Activated T-helper 1 cell treated with anti-CD3 and anti-CD28 coated beads, Interleukin-12 subunit alpha, Interleukin-12 subunit beta, Interleukin-2, Interleukin-4 antibody, amounts not matched to agents 30 ng/mL and 10 ng/mL and 1 ng/mL, durations not matched to agents 14 hours and 24 hours and 36 hours (primary cell): ENCODE measurements at regions of chr17 and their contacts with region 1.

Region 1: DNA sequence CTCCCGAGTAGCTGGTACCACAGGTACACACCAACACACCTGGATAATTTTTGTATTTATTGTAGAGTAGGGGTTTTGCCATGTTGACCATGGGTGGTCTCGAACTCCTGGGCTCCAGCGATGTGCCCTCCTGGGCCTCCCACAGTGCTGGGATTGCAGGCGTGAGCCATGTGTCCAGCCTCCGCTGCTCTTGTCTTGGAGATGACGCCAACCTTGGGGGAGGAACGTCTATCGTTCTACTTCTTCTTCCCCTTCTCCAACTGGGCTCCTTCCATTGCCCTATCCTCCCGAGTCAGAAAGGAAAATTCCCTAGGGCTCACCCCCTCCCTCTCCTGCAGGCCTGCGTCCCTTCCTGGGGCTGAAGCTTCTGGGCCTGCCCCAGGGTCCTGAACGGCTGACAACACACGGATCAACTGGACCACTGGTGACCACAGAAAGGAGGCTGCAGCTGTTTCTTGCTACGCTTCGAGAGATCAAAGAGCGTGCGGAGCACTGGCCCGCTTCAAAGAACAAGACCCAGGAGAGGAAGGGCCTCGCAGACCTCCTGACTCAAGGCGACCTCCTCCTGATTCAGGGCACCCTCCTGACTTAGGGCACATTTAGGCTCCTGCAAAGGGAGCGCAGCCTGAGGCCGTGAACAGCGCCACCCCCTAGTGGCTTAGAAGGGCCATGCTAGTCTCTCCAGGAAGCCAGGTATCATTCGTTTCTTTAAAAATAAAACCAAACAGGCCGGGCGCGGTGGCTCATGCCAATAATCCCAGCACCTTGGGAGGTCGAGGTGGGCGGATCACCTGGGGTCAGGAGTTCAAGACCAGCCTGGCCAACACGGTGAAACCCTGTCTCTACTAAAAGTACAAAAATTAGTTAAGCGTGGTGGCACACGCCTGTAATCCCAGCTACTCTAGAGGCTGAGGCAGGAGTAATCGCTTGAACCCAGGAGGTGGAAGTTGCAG is 48.5 kb upstream of the HELZ start:
- DNase-seq: peak; percentile 54
- H3K4me3 Mint-ChIP-seq: no peak overlapping the region
- H3K27ac Mint-ChIP-seq: no peak overlapping the region
- H3K4me1 Mint-ChIP-seq: peaks cover 4% of the 10 kb centered on the region
- H3K27me3 Mint-ChIP-seq: peaks cover 5% of the 10 kb centered on the region

Region 2: DNA sequence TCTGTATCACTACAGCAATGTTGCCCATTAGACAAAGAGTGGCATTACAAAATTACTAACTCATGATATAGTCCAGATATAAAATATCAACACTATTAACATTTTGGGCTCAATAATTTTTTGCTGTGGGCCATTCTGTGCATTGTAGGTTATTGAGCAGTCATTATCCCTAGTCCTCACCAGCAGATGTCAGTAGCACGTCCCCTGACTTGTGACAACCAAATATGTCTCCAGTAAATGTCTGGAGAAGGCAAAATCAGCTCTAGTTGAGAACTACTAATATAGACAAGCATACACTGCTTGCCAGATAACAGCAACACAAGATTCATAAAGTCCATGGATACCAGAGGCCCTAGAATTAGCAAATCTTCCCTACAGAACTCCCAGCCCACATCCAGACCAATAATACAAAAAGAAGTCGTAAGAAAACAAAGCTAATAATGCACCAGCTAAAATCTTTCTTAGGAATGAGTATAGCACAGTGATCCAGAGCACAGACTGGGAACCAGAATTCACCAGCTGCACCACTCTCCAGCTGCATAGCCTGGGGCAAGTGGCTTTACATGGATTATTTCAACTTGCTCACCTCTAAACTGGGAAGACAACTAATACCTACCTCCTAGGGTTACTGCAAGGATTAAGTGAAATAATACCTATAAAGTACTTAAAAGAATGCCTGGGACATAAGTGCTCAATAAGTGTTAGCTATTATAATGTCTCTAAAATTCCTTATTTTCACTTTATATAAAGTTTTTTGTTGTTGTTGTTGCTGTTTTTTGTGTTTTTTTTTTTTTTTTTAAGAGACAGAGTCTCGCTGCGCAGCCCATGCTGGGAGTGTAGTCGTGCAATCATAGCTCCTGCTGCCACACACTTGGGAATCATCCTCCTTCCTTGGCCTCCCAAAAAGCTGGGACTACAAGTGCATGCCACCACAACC is 72.2 kb before region 1 on chr17:
- intact Hi-C with region 1: loop called (anchors 1 kb)
- DNase-seq: peak; percentile 25
- H3K4me3 Mint-ChIP-seq: no peak overlapping the region
- H3K27ac Mint-ChIP-seq: peak overlapping the region; percentile 40
- H3K4me1 Mint-ChIP-seq: peaks cover 42% of the 10 kb centered on the region
- H3K27me3 Mint-ChIP-seq: no peaks in the 10 kb centered on the region

Region 3: DNA sequence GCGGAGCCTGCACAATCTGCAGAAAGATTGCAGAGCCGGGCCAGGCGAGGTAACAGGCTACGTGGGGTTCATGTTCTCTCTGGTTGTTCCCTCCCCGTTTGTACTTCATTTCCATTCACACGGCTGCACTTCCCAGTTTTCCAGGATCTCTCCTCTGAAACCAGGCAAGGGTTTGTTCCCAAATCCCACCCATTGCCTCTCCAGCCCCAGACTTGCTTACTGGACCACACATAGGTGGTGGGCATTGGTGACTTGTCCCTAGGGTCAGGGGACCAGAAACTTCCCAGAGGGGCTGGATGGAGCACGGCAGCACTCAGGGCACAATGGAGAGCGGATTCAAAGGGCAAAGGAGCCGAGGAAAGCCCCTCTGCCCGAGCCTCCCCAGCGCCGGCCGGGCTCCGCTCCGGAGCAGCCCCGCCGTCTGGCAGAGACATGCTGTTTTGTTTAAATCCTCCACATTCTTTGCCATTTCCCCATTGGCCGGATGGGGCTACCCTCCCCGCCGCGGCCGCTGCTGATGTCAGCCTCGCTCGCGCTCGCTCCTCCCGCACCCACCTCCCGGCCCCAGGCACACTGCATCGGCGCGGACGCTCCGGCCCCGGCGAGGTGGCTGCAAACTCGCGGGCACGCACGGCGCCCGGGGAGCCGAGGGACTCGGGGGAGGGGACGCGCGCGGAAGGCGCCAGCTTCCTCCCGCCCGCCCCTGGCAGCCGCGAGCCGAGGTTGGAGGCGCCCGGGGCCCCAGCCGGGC is 83.4 kb after region 1 on chr17 and contains the start of gene PITPNC1:
- intact Hi-C with region 1: no loop called
- DNase-seq: peak; percentile 81
- H3K4me3 Mint-ChIP-seq: peak within 1 kb of the TSS; percentile 88
- H3K27ac Mint-ChIP-seq: peak within 1 kb of the TSS; percentile 84
- H3K4me1 Mint-ChIP-seq: peaks cover 33% of the 10 kb centered on the region
- H3K27me3 Mint-ChIP-seq: peaks cover 2% of the 10 kb centered on the region
- total RNA-seq, gene PITPNC1: 17.7 and 18.3 TPM in 2 replicates